CD8-positive, alpha-beta memory T cell (primary cell): ENCODE measurements at regions of chr11 and their contacts with region 1.

Region 1: DNA sequence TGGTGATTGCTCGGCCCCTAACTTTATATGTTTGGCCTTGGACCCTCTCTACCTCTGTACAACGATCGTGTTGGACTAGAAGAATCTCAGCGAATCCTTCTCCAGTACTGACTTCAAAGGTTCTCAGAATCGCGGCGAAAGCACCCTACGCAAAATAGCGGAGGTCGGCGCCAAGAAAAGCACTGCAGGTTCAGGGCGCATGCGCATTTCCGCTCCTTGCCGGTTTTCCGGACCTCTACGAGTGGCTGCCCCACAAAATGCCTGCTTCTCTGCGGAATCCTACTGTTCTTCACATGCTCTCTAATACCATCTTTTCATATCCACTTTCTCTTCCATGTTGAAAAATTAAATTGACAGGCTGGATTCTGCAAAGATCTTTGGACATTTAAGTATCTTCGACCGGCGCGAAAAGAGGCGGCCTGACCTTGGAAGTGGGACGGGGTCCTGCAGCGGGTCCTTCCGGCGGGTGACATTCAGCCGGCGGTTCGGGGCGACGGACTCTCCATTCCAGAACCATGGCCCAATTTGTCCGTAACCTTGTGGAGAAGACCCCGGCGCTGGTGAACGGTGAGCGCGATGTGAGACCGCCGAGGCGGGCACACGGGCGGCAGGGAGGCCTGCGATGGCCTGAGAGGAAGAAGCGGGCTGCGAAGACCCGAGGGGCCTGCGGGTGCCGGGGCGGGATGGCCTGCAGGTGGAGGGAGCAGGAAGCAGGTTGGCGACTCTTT is at the start of gene ATP5MG:
- DNase-seq: peak; percentile 87 to 95 (median 91)
- H3K4me3 ChIP-seq: peak within 1 kb of the TSS; percentile 81
- H3K4me3 Mint-ChIP-seq: peak within 1 kb of the TSS; percentile 91 to 97 (median 96)
- H3K27ac ChIP-seq: peak within 1 kb of the TSS; percentile 91
- H3K27ac Mint-ChIP-seq: peak within 1 kb of the TSS; percentile 97 to 100 (median 100)
- H3K4me1 ChIP-seq: peaks cover 69% of the 10 kb centered on the region
- H3K4me1 Mint-ChIP-seq: peaks cover 69 to 98% (median 91%) of the 10 kb centered on the region in 3 donors
- H3K27me3 ChIP-seq: no peaks in the 10 kb centered on the region
- H3K27me3 Mint-ChIP-seq: peaks cover 0 to 3% of the 10 kb centered on the region in 2 donors
- total RNA-seq, gene ATP5MG: 277 to 280 TPM

Region 2: DNA sequence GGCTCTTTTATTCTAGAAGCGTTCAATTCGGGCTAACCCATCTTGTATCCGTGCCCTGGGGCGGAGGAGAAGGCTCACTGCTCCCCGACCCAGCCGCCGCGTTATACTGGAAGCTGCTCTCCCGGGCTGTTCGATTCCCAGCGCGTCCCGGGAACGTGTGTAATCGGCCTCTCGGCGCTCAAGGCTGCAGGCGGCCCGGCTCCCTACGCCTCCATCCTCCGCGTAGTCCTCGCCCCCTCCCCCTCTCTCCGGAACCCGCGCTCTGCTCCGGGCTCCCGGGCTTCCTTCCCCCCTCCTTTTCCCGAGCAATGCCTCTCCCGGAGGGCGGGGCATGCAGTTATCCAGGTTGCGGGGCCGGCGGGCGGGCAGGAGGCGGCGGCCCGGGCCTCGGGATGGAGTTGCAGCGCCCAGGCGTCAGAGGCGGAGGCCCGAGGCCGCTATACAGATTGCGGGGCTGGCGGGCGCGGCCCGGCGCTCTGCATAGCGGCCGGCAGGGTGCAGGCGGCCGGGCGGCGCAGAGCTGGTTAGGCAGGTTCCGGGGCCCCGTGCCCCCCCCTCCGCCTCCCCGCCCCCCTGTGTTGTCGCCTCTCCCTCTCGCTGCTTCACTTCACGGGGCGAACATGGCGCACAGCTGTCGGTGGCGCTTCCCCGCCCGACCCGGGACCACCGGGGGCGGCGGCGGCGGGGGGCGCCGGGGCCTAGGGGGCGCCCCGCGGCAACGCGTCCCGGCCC is 34.7 kb after region 1 on chr11 and contains the start of gene KMT2A:
- CTCF ChIA-PET with region 1: interaction called, 13 read pairs
- POLR2A ChIA-PET with region 1: interaction called, 19 read pairs
- DNase-seq: peak; percentile 87 to 96 (median 94)
- H3K4me3 ChIP-seq: peak within 1 kb of the TSS; percentile 76
- H3K4me3 Mint-ChIP-seq: peak within 1 kb of the TSS; percentile 91 to 99 (median 95)
- H3K27ac ChIP-seq: peak within 1 kb of the TSS; percentile 89
- H3K27ac Mint-ChIP-seq: peak within 1 kb of the TSS; percentile 92 to 99 (median 97)
- H3K4me1 ChIP-seq: peaks cover 30% of the 10 kb centered on the region
- H3K4me1 Mint-ChIP-seq: peaks cover 36% of the 10 kb centered on the region in 3 donors
- H3K27me3 ChIP-seq: no peaks in the 10 kb centered on the region
- H3K27me3 Mint-ChIP-seq: peaks cover 0 to 7% of the 10 kb centered on the region in 2 donors
- total RNA-seq, gene KMT2A: 80.0 to 80.6 TPM